GM10248 (cell line): ENCODE measurements at regions of chr3 and their contacts with region 1.

Region 1: GRCh38 chr3:156044634-156044975 is 75.8 kb upstream of the KCNAB1 start:
- DNase-seq: no peak
- CTCF ChIP-seq: no peak

Region 2: GRCh38 chr3:156030723-156031122 is 13.9 kb before region 1 on chr3:
- CTCF ChIA-PET with region 1: interaction called, 17 read pairs
- POLR2A ChIA-PET with region 1: no interaction called
- DNase-seq: no peak
- CTCF ChIP-seq: no peak

Region 3: DNA sequence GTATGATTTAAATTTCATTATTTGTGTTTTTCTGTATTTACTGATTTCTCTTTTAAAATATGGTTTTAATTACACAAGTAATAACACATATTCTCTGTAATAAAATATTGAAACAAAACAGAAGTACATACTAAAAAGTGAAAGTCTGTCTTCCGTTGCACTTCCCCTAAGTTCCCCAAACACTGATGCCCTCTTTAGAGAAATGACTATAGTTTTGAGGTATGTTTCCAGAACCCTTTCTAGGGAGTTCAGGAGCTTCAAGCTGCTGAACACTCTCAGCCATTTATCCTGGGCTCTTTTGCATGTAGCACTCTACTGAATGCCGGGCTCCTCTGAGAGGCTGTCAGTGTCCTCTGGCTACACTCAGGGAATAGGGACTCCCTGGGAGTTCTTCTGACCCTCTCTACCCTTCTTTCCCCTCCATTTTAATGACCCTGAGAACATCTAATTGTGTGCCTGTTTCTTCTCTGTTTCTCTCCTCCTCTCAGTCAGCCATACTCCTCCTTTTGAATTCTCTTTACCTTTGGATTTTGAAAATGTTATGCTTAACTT is 15.4 kb after region 1 on chr3:
- CTCF ChIA-PET with region 1: interaction called, 60 read pairs
- POLR2A ChIA-PET with region 1: no interaction called
- DNase-seq: no peak
- CTCF ChIP-seq: no peak